Activated T-helper 1 cell treated with anti-CD3 and anti-CD28 coated beads, Interleukin-12 subunit alpha, Interleukin-12 subunit beta, Interleukin-2, Interleukin-4 antibody, amounts not matched to agents 30 ng/mL and 10 ng/mL and 1 ng/mL, durations not matched to agents 14 hours and 24 hours and 36 hours (primary cell): ENCODE measurements at regions of chr4 and their contacts with region 1.

Region 1: DNA sequence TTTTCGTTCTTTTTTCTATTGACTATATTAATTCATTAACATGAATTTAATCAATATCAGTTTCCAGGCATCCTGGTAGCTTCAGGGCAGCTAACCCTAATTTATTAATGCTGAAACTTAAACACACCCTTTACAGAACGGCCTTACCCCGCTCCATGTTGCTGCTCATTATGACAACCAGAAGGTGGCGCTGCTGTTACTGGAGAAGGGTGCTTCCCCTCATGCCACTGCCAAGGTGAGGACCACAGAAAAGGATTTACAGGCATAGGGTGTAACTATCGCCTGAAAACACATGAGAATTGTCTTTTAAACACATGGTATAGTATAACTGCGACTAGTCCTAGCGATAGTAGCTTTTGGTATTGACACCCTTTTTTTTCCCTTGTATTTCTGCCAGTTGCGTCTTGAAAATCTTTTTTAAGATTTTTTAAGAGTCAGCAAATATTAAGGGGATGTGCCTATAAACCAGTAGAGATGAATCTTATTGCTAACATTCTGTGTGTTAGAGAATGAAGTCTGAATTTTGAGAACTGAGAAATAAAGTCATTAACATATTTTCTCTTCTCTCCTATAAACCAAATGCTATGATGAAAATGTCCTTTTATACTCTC is 229.0 kb downstream of the ANK2 start:
- DNase-seq: peak; percentile 31
- H3K4me3 Mint-ChIP-seq: no peak overlapping the region
- H3K27ac Mint-ChIP-seq: no peak overlapping the region
- H3K4me1 Mint-ChIP-seq: no peaks in the 10 kb centered on the region
- H3K27me3 Mint-ChIP-seq: peaks cover 6% of the 10 kb centered on the region

Region 2: GRCh38 chr4:113263274-113263673 is 15.2 kb before region 1 on chr4:
- intact Hi-C with region 1: no loop called
- DNase-seq: no peak
- H3K4me3 Mint-ChIP-seq: no peak overlapping the region
- H3K27ac Mint-ChIP-seq: no peak overlapping the region
- H3K4me1 Mint-ChIP-seq: no peaks in the 10 kb centered on the region
- H3K27me3 Mint-ChIP-seq: peaks cover 1% of the 10 kb centered on the region

Region 3: GRCh38 chr4:114659386-114660008 is 1381.1 kb after region 1 on chr4:
- intact Hi-C with region 1: loop called (anchors 1 kb)
- DNase-seq: no peak
- H3K4me3 Mint-ChIP-seq: no peak overlapping the region
- H3K27ac Mint-ChIP-seq: no peak overlapping the region
- H3K4me1 Mint-ChIP-seq: no peaks in the 10 kb centered on the region
- H3K27me3 Mint-ChIP-seq: peaks cover 5% of the 10 kb centered on the region